ENCODE measurements at regions of chr17 and their contacts with region 1.

Region 1: GRCh38 chr17:64736804-64737492 is 74.8 kb upstream of the SMURF2 start:
- DNase-seq: peak; percentile 27 to 39
- H3K4me3 ChIP-seq: no peak overlapping the region
- H3K27ac ChIP-seq: no peak overlapping the region
- H3K4me1 ChIP-seq: peaks cover 24 to 35% of the 10 kb centered on the region in 2 donors
- H3K27me3 ChIP-seq: no peaks in the 10 kb centered on the region
- CTCF ChIP-seq: peak in 5 of 6 experiments; percentile 12 to 47 (median 37)
- POLR2A ChIP-seq: no peak

Region 2: DNA sequence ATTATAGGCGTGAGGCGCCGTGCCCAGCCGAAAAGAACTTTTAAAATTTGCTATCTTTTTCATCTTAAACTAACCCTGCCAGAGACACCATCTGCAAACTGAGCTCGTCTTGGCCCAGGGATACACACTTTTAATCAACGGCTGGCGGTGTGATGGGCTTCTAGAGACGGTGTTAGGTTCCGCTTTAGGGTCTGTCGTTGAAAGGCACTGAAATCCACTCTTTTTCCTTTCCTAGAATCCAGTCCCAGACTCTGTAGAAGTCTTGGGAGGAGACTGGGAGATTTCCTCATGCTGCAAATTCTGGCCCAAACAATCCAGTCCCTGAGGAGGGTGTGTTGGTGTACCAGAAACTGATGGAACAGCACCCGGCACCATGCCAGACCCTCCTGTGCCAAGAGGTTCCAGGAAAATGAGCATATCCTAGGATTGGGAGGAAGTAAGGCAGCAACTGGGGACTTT is 421.9 kb before region 1 on chr17:
- intact Hi-C with region 1: loop called (anchors 10 kb)
- DNase-seq: peak; percentile 74 to 83
- H3K4me3 ChIP-seq: no peak overlapping the region
- H3K27ac ChIP-seq: peak overlapping the region; percentile 43 to 65 (median 58)
- H3K4me1 ChIP-seq: peaks cover 0 to 31% of the 10 kb centered on the region in 2 donors
- H3K27me3 ChIP-seq: no peaks in the 10 kb centered on the region
- CTCF ChIP-seq: no peak
- POLR2A ChIP-seq: no peak

Region 3: DNA sequence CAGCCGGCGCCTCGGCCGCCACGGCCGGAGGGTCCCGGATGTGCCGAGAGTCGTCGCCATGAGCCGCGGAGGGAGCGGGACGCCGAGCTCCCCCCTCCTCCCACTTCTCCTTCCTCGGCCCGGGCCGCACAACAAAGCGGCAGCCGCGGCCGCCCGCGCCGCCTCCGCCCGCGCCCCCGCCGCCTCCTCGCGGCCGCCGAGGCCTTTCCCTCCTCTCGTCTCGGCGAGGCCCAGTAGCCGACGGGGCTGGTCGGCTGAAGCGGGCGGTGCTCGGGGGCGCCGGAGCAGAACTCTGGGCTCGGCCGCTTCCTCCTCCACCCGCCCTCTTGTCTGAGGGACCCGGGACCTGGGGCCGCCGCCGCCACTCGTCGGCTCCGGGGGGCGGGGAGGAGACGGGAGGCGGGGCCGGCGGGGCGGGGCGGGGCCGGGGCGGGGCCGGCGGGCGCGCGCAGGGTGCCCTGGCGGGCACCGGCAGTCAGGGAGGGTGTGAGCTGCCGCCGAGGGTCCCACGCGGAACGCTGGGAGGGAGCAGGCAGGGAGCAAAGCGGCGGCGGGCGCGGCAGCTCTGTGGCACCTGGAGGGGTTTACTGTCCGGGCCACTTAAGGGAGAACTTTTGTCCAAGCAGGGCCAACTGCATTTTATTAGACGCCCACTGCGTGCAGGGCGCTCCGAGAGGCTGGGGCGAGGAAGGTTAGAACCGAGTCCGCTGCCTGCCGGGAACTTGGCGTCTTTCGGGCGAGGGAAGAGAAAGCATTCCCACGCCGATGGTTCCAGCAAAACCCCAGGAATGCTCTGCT is 74.8 kb before region 1 on chr17 and contains the start of gene SMURF2:
- intact Hi-C with region 1: loop called (anchors 10 kb)
- DNase-seq: peak; percentile 85 to 86
- H3K4me3 ChIP-seq: peak within 1 kb of the TSS; percentile 66 to 86 (median 74)
- H3K27ac ChIP-seq: peak within 1 kb of the TSS; percentile 79 to 83 (median 83)
- H3K4me1 ChIP-seq: peaks cover 22 to 27% of the 10 kb centered on the region in 2 donors
- H3K27me3 ChIP-seq: no peaks in the 10 kb centered on the region
- CTCF ChIP-seq: peak in 1 of 6 experiments; percentile 13
- POLR2A ChIP-seq: peak; percentile 69 to 94
- total RNA-seq, gene SMURF2: 26.3 to 39.0 (median 29.6) TPM

Measured in thyroid gland (tissue), 4 donors.